Sciatic nerve (tissue), 2 donors: ENCODE measurements at regions of chr1 and their contacts with region 1.

Region 1: DNA sequence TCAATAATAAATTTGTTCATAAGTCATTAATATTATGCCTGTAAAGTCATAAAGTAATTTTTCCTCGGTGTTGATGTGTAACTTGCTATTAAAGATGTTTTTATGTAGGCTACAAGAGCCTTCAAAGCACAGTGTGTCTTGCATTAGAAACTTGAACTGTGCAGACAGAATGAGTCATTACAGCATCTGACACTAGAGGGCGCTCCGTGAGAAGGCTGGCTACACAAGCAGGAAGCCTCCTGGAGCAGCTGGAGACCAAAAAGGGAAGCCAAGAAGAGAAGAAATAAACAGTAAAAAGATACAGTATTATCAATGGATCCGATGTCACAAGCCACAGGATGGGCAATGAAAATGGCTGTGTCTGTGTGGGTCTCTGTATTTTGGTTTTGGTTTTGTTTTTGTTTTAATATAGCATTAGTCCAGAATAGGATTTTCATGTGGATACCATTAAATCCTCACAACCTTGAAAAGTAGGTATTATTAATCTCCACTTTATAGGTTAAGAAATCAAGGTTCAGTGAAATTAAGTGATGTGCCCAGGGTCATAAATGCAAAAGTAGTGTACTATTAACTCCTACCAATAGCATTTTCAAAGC is 16.1 kb upstream of the LRRC8D start:
- DNase-seq: peak; percentile 94
- ATAC-seq: peak; percentile 92

Region 2: DNA sequence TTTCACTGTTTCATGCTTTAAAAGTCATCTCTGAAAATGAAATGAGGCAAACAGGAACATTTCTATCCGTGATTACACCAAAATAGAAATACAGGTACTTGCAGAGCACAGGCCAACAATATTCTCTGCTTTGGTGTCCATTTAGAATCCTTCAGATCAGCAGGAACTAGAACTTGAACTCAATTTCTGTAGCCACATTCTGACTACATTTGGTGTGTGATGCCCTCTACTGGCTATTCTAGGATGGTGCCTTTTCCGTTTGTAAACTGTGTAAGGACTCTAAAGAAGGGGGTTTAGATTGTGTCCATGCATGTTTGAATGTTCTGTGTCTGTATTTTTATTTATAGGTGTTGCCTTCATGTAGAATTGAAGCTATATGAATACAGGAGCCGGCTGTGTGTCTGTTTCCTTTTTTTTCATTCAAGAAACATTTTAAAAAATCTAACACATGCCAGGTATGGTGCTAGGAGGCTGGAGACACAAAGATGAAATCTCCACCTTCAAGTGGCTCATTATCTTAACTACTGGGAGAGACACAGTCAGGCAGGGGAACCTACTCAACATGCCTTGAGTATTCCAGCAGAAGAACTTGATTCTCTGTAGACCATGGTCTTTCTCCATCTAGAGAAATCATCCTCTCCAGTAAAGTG is 182.6 kb after region 1 on chr1:
- intact Hi-C with region 1: loop called (anchors 5 kb)
- DNase-seq: no peak
- ATAC-seq: peak; percentile 91